ENCODE measurements at regions of chr11 and their contacts with region 1.

Region 1: GRCh38 chr11:123511037-123511870 is 81.2 kb downstream of the GRAMD1B start:
- DNase-seq: peak; percentile 90
- ATAC-seq: peak; percentile 96

Region 2: DNA sequence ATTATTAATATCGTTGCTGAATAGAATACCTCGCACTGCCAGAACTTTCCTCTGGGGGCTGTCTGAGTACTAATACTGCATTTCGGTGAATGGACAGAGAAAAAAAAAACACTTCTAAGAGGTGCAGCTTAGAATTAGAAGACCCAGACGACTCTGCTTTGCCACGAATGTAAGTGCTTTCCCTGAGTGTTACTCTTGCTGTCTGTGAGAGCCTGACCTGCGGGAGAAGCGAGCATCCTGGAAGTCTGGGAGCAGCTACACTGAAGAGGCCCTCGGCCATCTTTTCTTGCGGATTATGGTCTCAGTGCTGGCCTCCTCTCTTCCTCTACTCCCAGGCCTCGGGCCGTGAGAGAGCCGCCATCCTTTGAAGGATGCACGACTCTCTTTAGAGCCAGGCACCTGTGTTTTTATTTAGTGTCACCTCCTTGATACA is 48.3 kb after region 1 on chr11:
- intact Hi-C with region 1: loop called (anchors 5 kb)
- DNase-seq: no peak
- ATAC-seq: peak; percentile 5

Region 3: GRCh38 chr11:123580557-123581275 is 69.5 kb after region 1 on chr11:
- intact Hi-C with region 1: loop called (anchors 2 kb)
- DNase-seq: peak; percentile 67
- ATAC-seq: peak; percentile 78

Measured in Right ventricle myocardium superior (tissue), 1 donor.